Heart left ventricle (tissue), 16 donors: ENCODE measurements at regions of chrX and their contacts with region 1.

Region 1: GRCh38 chrX:153032397-153033118 is 23.7 kb upstream of the PNMA3 start:
- DNase-seq: peak; percentile 57 to 87 (median 64)
- ATAC-seq: peak in 3 of 4 donors; percentile 78 to 92 (median 90)
- H3K4me3 ChIP-seq: peak overlapping the region in 11 of 12 donors; percentile 3 to 49 (median 40)
- H3K27ac ChIP-seq: peak overlapping the region in 1 of 12 donors; percentile 38
- H3K4me1 ChIP-seq: peaks cover 0 to 4% (median 0%) of the 10 kb centered on the region in 12 donors
- H3K27me3 ChIP-seq: no peaks in the 10 kb centered on the region
- CTCF ChIP-seq: peak; percentile 72 to 90 (median 78)
- POLR2A ChIP-seq: no peak

Region 2: GRCh38 chrX:152861092-152861491 is 171.5 kb before region 1 on chrX:
- intact Hi-C with region 1: no loop called
- DNase-seq: no peak
- ATAC-seq: no peak
- H3K4me3 ChIP-seq: no peak overlapping the region
- H3K27ac ChIP-seq: no peak overlapping the region
- H3K4me1 ChIP-seq: no peaks in the 10 kb centered on the region
- H3K27me3 ChIP-seq: no peaks in the 10 kb centered on the region
- CTCF ChIP-seq: no peak
- POLR2A ChIP-seq: no peak

Region 3: DNA sequence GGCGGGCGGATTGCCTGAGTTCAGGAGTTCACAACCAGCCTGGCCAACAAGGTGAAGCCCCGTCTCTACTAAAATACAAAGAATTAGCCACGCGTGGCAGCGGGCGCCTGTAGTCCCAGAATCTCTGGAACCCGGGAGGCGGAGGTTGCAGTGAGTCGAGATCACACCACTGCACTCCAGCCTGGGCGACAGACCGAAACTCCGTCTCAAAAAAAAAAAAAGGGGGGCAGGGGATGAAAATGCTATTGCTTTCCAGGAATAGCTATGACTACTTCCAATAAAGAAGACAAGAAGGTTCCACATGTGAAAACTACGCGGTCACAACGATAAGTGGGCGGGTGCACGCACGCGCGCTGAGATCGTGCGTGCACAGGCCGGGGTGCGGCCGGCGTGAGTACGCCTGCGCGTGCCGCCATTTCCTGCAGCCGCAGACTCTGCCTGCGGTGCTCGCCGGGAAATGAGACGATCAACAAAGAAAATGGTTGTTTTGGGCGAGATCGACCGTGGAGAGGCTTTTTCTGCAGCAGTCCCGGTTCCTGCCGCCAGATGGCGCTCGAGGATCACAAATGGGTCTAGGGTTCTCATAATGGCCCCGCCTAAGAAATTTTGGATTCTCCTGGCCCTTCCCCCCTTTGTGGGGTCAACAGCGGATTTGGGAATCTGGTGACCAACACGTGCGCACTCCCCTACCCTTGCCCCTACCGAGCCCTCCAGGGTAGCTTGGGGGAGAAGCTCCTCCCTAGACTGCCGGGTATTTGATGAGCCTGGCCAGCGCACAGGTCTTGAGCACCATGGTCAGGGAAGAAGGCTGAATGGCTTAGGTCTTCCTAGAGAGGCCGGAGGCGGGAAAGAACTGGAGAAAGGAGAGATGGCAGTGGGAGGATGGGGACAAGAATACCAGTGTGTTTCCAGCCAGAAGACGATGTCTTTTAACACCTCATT is 73.8 kb before region 1 on chrX:
- intact Hi-C with region 1: loop called in 1 of 10 experiments (anchors 5 kb)
- DNase-seq: peak; percentile 85 to 92 (median 88)
- ATAC-seq: peak; percentile 92 to 99 (median 98)
- H3K4me3 ChIP-seq: peak overlapping the region in 10 of 12 donors; percentile 19 to 51 (median 39)
- H3K27ac ChIP-seq: peak overlapping the region in 8 of 12 donors; percentile 47 to 74 (median 55)
- H3K4me1 ChIP-seq: peaks cover 0 to 8% (median 0%) of the 10 kb centered on the region in 12 donors
- H3K27me3 ChIP-seq: peaks cover 0 to 4% (median 0%) of the 10 kb centered on the region in 9 donors
- CTCF ChIP-seq: peak; percentile 71 to 92 (median 80)
- POLR2A ChIP-seq: no peak

Region 4: DNA sequence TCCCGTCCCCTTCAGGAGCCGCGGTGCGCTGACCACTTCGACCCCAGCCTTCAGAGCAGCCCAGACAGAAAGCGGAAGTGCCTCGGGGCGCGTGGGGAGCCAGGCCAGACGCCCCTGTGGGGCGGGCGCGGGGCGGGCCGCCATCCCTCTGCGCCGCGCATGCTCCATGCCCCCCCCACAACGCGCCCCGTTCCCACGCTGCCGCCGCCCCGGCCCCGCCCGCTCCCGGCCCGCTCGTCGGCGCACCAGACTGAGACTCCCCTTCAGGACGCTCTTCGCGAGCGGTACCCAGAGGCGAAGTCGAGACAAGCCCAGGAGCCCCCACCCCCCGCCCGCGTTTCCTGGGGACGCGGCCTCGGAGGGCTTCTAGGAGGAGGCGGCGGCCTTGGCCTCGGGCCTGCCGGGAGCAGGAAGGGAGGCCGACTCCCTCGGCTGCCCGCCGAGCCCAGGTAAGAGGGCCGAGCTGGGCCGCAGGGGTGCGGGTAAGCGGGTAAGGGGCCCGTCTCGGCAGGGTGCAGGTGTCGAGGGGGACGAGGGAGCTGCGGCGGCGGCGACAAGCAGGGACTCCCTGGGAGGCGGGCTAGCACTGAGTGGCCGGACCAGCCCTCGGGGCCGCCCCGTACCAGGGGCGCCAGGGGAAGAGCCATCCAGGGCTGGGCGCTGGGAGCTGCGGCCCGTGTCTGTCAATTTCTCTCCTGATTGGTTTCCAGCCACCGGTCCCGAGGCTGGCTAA is 378.9 kb after region 1 on chrX and contains the start of gene ZFP92:
- intact Hi-C with region 1: loop called in 2 of 10 experiments (anchors 10 kb)
- DNase-seq: peak; percentile 23 to 72 (median 45)
- ATAC-seq: peak in 3 of 4 donors; percentile 62 to 81 (median 64)
- H3K4me3 ChIP-seq: peak within 1 kb of the TSS; percentile 29 to 64 (median 57)
- H3K27ac ChIP-seq: peak within 1 kb of the TSS in 6 of 12 donors; percentile 9 to 59 (median 45)
- H3K4me1 ChIP-seq: peaks cover 0 to 14% (median 0%) of the 10 kb centered on the region in 12 donors
- H3K27me3 ChIP-seq: peaks cover 0 to 18% (median 0%) of the 10 kb centered on the region in 9 donors
- CTCF ChIP-seq: no peak
- POLR2A ChIP-seq: no peak
- total RNA-seq, gene ZFP92: 0.22 to 1.5 (median 0.64) TPM

Region 5: DNA sequence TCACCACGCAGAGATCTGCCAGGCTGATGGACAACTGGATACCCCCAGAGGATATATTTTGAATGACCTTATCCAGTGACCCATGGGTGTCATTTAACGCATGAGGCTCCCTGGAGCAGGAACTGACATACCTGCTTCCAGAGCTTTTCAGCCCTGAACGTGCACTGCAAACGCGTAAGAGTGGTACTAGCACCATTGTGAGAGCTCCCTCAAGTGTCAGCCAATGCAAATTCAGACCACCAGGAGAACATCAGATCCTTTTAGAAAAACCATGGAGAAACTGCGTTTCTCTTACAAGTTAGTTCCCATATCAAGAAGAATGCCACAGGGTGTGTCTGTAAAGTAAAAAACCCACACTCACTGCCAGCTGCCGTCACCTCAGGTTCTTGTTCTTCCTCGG is 406.0 kb after region 1 on chrX:
- intact Hi-C with region 1: loop called in 3 of 10 experiments (anchors 5 to 10 kb)
- DNase-seq: no peak
- ATAC-seq: peak in 2 of 4 donors; percentile 37 to 53
- H3K4me3 ChIP-seq: no peak overlapping the region
- H3K27ac ChIP-seq: no peak overlapping the region
- H3K4me1 ChIP-seq: no peaks in the 10 kb centered on the region
- H3K27me3 ChIP-seq: peaks cover 0 to 20% (median 0%) of the 10 kb centered on the region in 9 donors
- CTCF ChIP-seq: peak in 8 of 12 donors; percentile 10 to 46 (median 25)
- POLR2A ChIP-seq: no peak

Region 6: GRCh38 chrX:153443481-153444332 is 411.1 kb after region 1 on chrX:
- intact Hi-C with region 1: loop called in 3 of 10 experiments (anchors 5 to 10 kb)
- DNase-seq: no peak
- ATAC-seq: peak in 2 of 4 donors; percentile 9 to 35
- H3K4me3 ChIP-seq: no peak overlapping the region
- H3K27ac ChIP-seq: no peak overlapping the region
- H3K4me1 ChIP-seq: no peaks in the 10 kb centered on the region
- H3K27me3 ChIP-seq: no peaks in the 10 kb centered on the region
- CTCF ChIP-seq: no peak
- POLR2A ChIP-seq: no peak

Region 7: DNA sequence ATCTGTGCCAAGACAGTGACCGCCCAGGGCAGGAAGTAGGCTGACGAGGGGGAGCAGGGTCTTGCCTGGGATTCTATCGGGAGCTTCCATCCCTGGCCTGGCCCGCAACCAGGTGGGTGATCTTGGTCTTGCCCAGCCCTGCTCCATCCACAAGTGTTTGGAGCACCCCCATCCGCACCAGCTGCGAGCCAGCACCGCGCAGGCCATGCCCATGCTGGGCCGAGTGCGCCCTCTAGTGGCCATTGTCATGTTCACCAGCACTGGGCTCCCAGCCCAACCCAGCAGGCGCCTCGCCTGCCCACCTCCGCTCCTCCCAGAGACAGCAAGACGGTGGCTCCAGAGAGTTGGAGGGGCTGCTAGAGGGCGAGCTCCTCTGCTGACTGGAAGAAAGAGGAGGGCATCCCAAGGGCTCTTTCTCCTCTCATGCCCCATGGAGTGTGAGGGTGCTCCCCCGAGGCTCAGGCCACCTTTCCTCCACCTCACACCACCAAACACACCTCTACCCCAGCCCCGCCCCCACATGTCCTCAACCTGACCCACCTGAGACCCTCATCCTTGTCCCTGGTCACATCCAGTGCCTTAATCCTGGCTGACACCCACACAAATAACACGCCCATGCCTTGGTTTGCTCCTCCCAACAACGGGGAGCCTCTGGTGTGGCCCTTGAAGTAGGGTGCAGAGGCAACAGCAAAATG is 475.1 kb after region 1 on chrX:
- intact Hi-C with region 1: loop called in 4 of 10 experiments (anchors 2 to 5 kb)
- DNase-seq: peak; percentile 75 to 88 (median 79)
- ATAC-seq: peak; percentile 61 to 93 (median 84)
- H3K4me3 ChIP-seq: no peak overlapping the region
- H3K27ac ChIP-seq: peak overlapping the region in 2 of 12 donors; percentile 22 to 24
- H3K4me1 ChIP-seq: peaks cover 0 to 7% (median 0%) of the 10 kb centered on the region in 12 donors
- H3K27me3 ChIP-seq: peaks cover 0 to 4% (median 0%) of the 10 kb centered on the region in 9 donors
- CTCF ChIP-seq: peak; percentile 72 to 93 (median 79)
- POLR2A ChIP-seq: no peak